A673 (cell line): ENCODE measurements at regions of chr19 and their contacts with region 1.

Region 1: GRCh38 chr19:3125900-3126524 is 9.8 kb upstream of the GNA15 start:
- DNase-seq: peak; percentile 52
- H3K4me3 ChIP-seq: no peak overlapping the region
- H3K27ac ChIP-seq: no peak overlapping the region
- H3K4me1 ChIP-seq: no peaks in the 10 kb centered on the region
- H3K27me3 ChIP-seq: no peaks in the 10 kb centered on the region
- CTCF ChIP-seq: peak; percentile 91

Region 2: DNA sequence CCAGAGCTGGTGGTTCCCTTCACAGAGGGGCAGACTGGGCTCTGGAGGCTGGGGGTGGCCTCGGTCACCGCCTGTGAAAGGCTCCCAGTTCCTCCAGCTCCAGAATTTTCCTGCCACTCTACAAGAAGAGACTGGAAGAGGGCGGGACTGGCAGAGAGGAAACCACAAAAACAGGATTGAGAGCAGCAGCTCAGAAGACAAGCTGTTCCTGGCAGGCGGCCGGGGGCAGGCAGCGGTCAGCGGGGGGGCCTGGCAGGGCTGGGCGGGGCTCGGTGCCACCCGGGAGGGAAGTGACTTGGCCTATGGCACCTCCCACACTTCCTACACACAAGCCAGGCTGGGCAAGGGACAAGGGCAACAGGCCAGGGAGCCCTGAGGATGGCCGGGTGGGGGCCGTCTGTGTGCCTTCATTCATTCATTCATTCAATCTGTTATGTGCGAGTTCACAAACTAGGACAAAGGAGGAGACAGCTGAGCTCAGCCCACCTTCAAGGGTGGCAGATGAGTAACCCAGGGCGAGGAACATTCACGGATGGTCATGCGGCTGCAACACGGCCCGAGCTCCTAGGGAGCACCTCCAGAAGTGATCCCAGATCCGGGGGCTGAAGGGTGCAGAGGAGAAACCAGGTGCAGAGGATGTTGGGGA is 1093.6 kb before region 1 on chr19:
- CTCF ChIA-PET with region 1: no interaction called
- POLR2A ChIA-PET with region 1: no interaction called
- intact Hi-C with region 1: no loop called
- DNase-seq: peak; percentile 92
- H3K4me3 ChIP-seq: no peak overlapping the region
- H3K27ac ChIP-seq: peak overlapping the region; percentile 86
- H3K4me1 ChIP-seq: peaks cover 16% of the 10 kb centered on the region
- H3K27me3 ChIP-seq: no peaks in the 10 kb centered on the region
- CTCF ChIP-seq: no peak

Region 3: GRCh38 chr19:2962045-2962561 is 163.9 kb before region 1 on chr19:
- CTCF ChIA-PET with region 1: interaction called, 4 read pairs
- POLR2A ChIA-PET with region 1: no interaction called
- intact Hi-C with region 1: loop called (anchors 1 kb)
- DNase-seq: peak; percentile 87
- H3K4me3 ChIP-seq: no peak overlapping the region
- H3K27ac ChIP-seq: no peak overlapping the region
- H3K4me1 ChIP-seq: no peaks in the 10 kb centered on the region
- H3K27me3 ChIP-seq: no peaks in the 10 kb centered on the region
- CTCF ChIP-seq: peak; percentile 80

Region 4: GRCh38 chr19:3149526-3150505 is 23.8 kb after region 1 on chr19:
- CTCF ChIA-PET with region 1: no interaction called
- POLR2A ChIA-PET with region 1: interaction called, 13 read pairs
- intact Hi-C with region 1: no loop called
- DNase-seq: no peak
- H3K4me3 ChIP-seq: no peak overlapping the region
- H3K27ac ChIP-seq: no peak overlapping the region
- H3K4me1 ChIP-seq: peaks cover 2% of the 10 kb centered on the region
- H3K27me3 ChIP-seq: no peaks in the 10 kb centered on the region
- CTCF ChIP-seq: no peak

Region 5: GRCh38 chr19:3163230-3163886 is 37.3 kb after region 1 on chr19:
- CTCF ChIA-PET with region 1: interaction called, 9 read pairs
- POLR2A ChIA-PET with region 1: no interaction called
- intact Hi-C with region 1: loop called (anchors 1 kb)
- DNase-seq: peak; percentile 85
- H3K4me3 ChIP-seq: no peak overlapping the region
- H3K27ac ChIP-seq: no peak overlapping the region
- H3K4me1 ChIP-seq: no peaks in the 10 kb centered on the region
- H3K27me3 ChIP-seq: no peaks in the 10 kb centered on the region
- CTCF ChIP-seq: peak; percentile 94